IMR-90 (cell line): ENCODE measurements at regions of chr1 and their contacts with region 1.

Region 1: DNA sequence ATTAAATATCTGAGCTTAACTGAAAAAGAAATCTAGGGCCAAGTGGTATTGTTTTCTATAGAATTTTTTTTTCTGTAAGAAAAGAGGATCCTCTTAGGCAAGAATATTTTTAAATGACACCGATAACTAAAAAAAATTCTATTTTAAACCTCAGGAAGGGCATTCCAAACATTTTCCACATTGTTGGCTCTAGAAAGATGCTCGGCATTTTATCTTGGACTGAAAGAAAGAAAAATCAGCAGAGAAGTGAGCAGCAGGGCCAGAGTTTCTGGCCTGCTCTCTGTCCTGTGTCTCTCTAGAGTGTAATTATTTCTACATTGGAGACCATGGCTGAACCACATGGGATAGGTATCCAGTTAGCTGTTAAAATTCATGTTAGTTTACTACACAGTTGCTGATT is 192.5 kb upstream of the GREM2 start:
- DNase-seq: peak; percentile 48
- ATAC-seq: peak; percentile 74
- H3K4me3 ChIP-seq: no peak overlapping the region
- H3K27ac ChIP-seq: no peak overlapping the region
- H3K4me1 ChIP-seq: peaks cover 4% of the 10 kb centered on the region; the same call in 1 of the 2 replicates
- H3K27me3 ChIP-seq: no peaks in the 10 kb centered on the region
- CTCF ChIP-seq: no peak
- POLR2A ChIP-seq: no peak
- RAD21 ChIP-seq: no peak

Region 2: GRCh38 chr1:240575981-240576662 is 228.4 kb before region 1 on chr1:
- CTCF ChIA-PET with region 1: no interaction called
- POLR2A ChIA-PET with region 1: no interaction called
- dilution Hi-C with region 1: no loop called
- in situ Hi-C with region 1: no loop called
- intact Hi-C with region 1: no loop called
- DNase-seq: peak; percentile 60
- ATAC-seq: peak; percentile 44
- H3K4me3 ChIP-seq: peak overlapping the region; percentile 40; the same call in 1 of the 2 replicates
- H3K27ac ChIP-seq: no peak overlapping the region
- H3K4me1 ChIP-seq: no peaks in the 10 kb centered on the region; the same call in 1 of the 2 replicates
- H3K27me3 ChIP-seq: no peaks in the 10 kb centered on the region
- CTCF ChIP-seq: no peak
- POLR2A ChIP-seq: no peak
- RAD21 ChIP-seq: no peak

Region 3: DNA sequence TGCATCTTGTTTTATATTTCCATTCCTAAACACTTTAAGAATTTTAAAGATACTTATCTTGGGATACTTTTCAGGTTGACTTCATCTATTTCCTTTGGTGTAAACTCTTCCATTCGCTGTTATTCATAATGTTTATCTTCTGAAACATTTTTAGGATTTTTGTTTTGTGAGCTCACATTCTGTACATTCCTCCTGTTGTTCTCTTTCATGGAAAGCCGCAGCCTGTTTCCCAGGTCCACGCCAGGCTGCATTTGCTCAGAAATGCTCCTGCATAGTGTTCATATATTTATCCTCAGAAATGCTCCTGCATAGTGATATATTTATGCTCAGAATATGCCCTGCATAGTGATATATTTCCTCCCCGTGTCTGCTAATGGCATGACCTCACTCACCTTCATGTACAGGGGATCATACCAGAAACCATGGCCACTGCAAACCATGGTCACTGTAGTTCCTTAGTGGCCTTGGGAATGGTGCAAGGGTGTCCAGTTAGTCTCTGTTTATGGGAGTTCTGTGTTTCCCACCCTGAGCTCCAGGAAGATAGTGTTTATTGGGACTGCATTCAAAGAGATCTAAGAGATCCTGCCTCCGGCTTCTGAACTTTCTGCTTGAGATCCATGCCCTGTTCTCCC is 38.6 kb before region 1 on chr1:
- CTCF ChIA-PET with region 1: no interaction called
- POLR2A ChIA-PET with region 1: no interaction called
- dilution Hi-C with region 1: no loop called
- in situ Hi-C with region 1: no loop called
- intact Hi-C with region 1: loop called (anchors 2 kb)
- DNase-seq: peak; percentile 81
- ATAC-seq: peak; percentile 88
- H3K4me3 ChIP-seq: no peak overlapping the region
- H3K27ac ChIP-seq: peak overlapping the region; percentile 86
- H3K4me1 ChIP-seq: peaks cover 15% of the 10 kb centered on the region
- H3K27me3 ChIP-seq: no peaks in the 10 kb centered on the region
- CTCF ChIP-seq: no peak
- POLR2A ChIP-seq: no peak
- RAD21 ChIP-seq: no peak